Common myeloid progenitor, CD34-positive (primary cell): ENCODE measurements at regions of chr14 and their contacts with region 1.

Region 1: GRCh38 chr14:51979088-51979709 is 10.1 kb upstream of the RTRAF start:
- DNase-seq: peak; percentile 81 to 90 (median 86)
- H3K4me3 ChIP-seq: no peak overlapping the region
- H3K27ac ChIP-seq: no peak overlapping the region
- H3K4me1 ChIP-seq: peaks cover 0 to 6% (median 4%) of the 10 kb centered on the region in 4 experiments
- H3K27me3 ChIP-seq: no peaks in the 10 kb centered on the region

Region 2: DNA sequence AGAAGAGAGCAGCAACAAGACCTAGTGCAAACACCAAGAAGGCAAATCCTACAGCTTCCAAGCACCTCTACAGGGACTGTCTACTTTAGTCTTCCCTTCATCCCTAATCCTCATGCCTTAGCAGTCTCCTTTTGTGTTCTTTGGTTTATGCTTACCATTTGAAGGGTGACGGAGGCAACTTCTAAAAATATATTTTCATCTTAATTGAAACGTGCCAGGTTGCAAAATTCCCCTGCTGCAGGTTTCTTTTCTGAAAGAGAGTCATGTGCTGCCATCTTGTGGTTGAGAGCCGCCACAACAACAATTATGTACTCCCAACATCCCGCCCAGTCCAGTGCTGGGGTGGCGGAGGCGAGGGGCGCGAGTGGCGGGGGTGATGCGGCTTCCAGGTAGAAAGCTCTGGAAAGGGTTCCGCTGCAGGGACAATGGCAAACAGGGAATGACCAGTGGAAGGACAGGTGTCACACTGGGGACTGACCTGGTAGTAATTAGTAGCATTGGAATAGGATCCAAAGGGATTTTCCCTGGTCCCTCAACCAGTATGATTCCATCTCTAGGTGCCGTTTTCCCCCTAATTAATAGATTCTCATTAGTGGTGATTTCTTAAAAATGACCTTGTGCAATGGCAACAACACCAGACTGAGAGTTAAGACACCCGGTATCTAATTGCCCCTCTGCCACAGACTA is 199.1 kb before region 1 on chr14:
- CTCF ChIA-PET with region 1: interaction called, 71 read pairs
- POLR2A ChIA-PET with region 1: no interaction called
- DNase-seq: peak; percentile 54 to 78 (median 68)
- H3K4me3 ChIP-seq: peak overlapping the region in 1 of 7 experiments; percentile 7
- H3K27ac ChIP-seq: no peak overlapping the region
- H3K4me1 ChIP-seq: peaks cover 0 to 11% (median 5%) of the 10 kb centered on the region in 4 experiments
- H3K27me3 ChIP-seq: peaks cover 0 to 2% (median 0%) of the 10 kb centered on the region in 5 experiments

Region 3: DNA sequence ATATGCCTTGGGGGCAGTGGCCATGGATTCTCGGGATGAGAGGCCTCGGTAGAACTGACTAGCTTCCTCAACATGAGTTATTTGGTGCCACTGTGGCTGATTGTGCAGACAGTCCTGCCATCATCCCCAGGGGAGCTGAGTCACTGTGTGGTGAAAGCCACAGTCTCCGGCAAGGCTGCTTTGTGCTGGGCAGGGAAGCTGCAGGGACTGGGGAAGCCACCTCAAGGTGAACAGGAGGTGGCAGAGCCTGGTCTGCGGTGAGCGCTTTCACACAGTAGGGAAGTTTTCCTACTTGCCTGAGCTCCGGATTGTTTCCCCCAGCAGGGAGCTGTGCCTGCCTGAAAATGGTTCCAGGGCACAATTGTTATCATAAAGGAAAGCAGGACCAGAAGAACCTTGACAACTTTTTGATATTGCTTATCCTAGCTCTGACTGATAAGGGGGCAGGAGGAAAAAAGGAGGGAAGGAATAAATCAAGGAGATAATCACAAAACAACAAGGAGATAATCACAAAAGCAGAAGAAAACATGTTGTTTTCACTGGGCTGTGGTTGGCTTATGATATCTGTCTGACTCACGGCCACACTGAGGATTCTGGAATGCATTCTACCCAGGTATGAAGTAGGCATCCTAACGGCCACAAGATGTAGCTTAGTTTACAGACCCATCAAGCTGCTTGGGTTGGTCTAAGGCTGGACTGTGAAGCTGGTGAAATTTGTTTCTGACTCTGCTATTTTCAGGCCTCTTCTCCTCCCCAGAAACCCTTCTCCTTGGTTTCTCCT is 151.0 kb before region 1 on chr14:
- CTCF ChIA-PET with region 1: interaction called, 40 read pairs
- POLR2A ChIA-PET with region 1: interaction called, 3 read pairs
- DNase-seq: peak; percentile 89 to 98 (median 97)
- H3K4me3 ChIP-seq: peak overlapping the region in 1 of 7 experiments; percentile 1
- H3K27ac ChIP-seq: no peak overlapping the region
- H3K4me1 ChIP-seq: peaks cover 5 to 29% (median 21%) of the 10 kb centered on the region in 4 experiments
- H3K27me3 ChIP-seq: no peaks in the 10 kb centered on the region

Region 4: GRCh38 chr14:51846631-51847488 is 132.3 kb before region 1 on chr14:
- CTCF ChIA-PET with region 1: interaction called, 10 read pairs
- POLR2A ChIA-PET with region 1: no interaction called
- DNase-seq: peak; percentile 97 to 100 (median 99)
- H3K4me3 ChIP-seq: peak overlapping the region in 6 of 7 experiments; percentile 58 to 80 (median 73)
- H3K27ac ChIP-seq: peak overlapping the region; percentile 98 to 99
- H3K4me1 ChIP-seq: peaks cover 28 to 49% (median 33%) of the 10 kb centered on the region in 4 experiments
- H3K27me3 ChIP-seq: no peaks in the 10 kb centered on the region

Region 5: GRCh38 chr14:51873221-51873893 is 105.8 kb before region 1 on chr14:
- CTCF ChIA-PET with region 1: no interaction called
- POLR2A ChIA-PET with region 1: no interaction called
- DNase-seq: peak; percentile 76 to 94 (median 92)
- H3K4me3 ChIP-seq: no peak overlapping the region
- H3K27ac ChIP-seq: peak overlapping the region; percentile 30 to 51
- H3K4me1 ChIP-seq: peaks cover 6 to 13% (median 8%) of the 10 kb centered on the region in 4 experiments
- H3K27me3 ChIP-seq: no peaks in the 10 kb centered on the region

Region 6: DNA sequence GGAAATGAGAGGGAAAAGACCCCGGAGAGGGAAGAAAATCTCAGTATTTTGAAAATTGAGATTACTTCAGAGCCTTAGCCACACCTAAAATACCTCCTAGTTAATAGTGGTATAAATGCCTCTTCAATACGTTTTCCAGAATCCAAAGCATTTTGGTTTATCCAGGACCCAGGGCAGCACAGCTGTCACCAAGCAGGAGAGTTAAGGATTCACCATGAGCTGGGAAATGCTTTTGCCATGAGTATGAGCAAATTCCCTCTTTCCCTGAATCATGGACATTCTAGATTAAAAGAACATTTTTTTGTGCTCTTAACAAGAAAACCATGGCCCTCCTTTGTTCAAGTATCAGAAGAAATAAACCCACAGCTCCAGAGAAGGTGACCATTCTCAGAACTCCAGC is 11.7 kb before region 1 on chr14:
- CTCF ChIA-PET with region 1: interaction called, 37 read pairs
- POLR2A ChIA-PET with region 1: no interaction called
- DNase-seq: no peak
- H3K4me3 ChIP-seq: no peak overlapping the region
- H3K27ac ChIP-seq: no peak overlapping the region
- H3K4me1 ChIP-seq: peaks cover 0 to 14% (median 2%) of the 10 kb centered on the region in 4 experiments
- H3K27me3 ChIP-seq: no peaks in the 10 kb centered on the region

Region 7: GRCh38 chr14:51996148-51996746 is 17.0 kb after region 1 on chr14:
- CTCF ChIA-PET with region 1: interaction called, 28 read pairs
- POLR2A ChIA-PET with region 1: no interaction called
- DNase-seq: peak; percentile 72 to 85 (median 76)
- H3K4me3 ChIP-seq: no peak overlapping the region
- H3K27ac ChIP-seq: no peak overlapping the region
- H3K4me1 ChIP-seq: peaks cover 0 to 2% (median under 1%) of the 10 kb centered on the region in 4 experiments
- H3K27me3 ChIP-seq: no peaks in the 10 kb centered on the region

Region 8: GRCh38 chr14:52052288-52052943 is 73.2 kb after region 1 on chr14:
- CTCF ChIA-PET with region 1: no interaction called
- POLR2A ChIA-PET with region 1: no interaction called
- DNase-seq: no peak
- H3K4me3 ChIP-seq: no peak overlapping the region
- H3K27ac ChIP-seq: no peak overlapping the region
- H3K4me1 ChIP-seq: no peaks in the 10 kb centered on the region
- H3K27me3 ChIP-seq: peaks cover 0 to 5% (median 0%) of the 10 kb centered on the region in 5 experiments